A673 (cell line): ENCODE measurements at regions of chr19 and their contacts with region 1.

Region 1: DNA sequence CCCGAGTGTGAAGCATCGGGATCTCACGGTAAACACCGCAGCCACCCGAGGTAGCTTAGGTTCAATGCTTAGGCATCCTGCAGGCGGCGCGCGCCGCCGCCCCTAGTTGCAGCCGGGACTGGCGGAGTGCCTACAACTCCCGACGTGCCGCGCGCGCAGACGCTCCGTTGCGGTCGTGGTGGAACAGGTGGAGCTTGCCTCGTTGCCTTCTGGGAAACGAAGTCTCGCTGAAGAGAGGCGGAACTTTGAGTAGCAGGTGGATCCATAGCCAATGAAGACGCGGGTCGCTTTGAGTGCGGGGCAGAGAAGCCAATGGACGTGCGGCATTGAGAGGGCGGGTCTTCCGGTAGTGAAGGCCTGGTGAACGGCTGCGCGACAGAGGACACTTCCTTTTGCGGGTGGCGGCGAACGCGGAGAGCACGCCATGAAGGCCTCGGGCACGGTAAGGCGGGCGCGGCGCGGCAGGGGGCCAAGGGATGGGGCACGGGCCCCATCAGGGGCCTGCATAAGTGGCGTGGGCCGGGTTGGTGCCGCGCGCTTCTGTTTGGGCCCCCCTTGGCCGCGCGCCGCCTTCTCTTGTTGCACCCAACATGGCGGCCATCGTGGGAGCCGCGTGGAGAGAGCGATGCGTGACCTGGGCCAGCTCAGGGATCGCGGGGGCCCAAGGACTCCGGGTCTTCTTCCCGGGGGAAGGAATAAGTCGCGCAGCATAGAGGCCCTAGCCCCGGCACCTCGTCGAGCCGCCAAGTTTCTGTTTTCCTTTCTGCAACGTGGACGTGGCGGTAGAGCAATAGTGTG is at the start of gene RPL18A:
- DNase-seq: peak; percentile 100
- H3K4me3 ChIP-seq: peak within 1 kb of the TSS; percentile 74
- H3K27ac ChIP-seq: peak within 1 kb of the TSS; percentile 85
- H3K4me1 ChIP-seq: peaks cover 12% of the 10 kb centered on the region
- H3K27me3 ChIP-seq: no peaks in the 10 kb centered on the region
- CTCF ChIP-seq: peak; percentile 95
- total RNA-seq, gene RPL18A: 1,852 and 1,889 TPM in 2 replicates

Region 2: DNA sequence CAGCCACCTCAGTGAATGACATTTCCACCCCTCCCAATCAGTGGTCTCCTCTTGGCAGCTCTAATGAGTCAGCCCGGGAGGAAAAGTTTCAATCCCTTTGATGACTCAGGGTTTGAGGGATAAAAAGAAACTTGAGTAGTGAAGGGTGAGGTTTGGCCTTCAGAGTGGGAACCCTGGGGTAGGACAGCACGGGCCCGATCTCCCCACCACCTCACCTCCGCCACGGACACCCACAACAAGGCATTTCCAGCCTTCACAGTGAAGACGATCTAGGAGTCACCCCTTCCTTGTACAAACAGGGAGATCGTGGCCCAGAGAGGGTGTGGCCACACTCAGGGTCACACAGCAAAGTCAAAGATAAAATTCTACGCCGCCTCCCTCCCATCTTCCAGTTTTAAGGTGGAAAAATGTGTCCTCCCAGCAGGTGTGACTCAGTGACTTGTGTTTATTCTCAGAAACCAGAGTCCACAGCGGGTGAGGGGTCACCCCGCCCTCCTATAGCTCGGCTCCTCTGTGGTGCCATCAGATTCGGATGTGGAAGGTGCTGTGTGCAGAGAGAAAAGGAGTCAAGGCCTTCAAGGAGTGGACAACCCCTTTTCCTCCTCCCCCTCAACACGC is 1698.7 kb before region 1 on chr19:
- CTCF ChIA-PET with region 1: interaction called, 11 read pairs
- POLR2A ChIA-PET with region 1: no interaction called
- intact Hi-C with region 1: no loop called
- DNase-seq: peak; percentile 45
- H3K4me3 ChIP-seq: no peak overlapping the region
- H3K27ac ChIP-seq: no peak overlapping the region
- H3K4me1 ChIP-seq: no peaks in the 10 kb centered on the region
- H3K27me3 ChIP-seq: no peaks in the 10 kb centered on the region
- CTCF ChIP-seq: no peak

Region 3: DNA sequence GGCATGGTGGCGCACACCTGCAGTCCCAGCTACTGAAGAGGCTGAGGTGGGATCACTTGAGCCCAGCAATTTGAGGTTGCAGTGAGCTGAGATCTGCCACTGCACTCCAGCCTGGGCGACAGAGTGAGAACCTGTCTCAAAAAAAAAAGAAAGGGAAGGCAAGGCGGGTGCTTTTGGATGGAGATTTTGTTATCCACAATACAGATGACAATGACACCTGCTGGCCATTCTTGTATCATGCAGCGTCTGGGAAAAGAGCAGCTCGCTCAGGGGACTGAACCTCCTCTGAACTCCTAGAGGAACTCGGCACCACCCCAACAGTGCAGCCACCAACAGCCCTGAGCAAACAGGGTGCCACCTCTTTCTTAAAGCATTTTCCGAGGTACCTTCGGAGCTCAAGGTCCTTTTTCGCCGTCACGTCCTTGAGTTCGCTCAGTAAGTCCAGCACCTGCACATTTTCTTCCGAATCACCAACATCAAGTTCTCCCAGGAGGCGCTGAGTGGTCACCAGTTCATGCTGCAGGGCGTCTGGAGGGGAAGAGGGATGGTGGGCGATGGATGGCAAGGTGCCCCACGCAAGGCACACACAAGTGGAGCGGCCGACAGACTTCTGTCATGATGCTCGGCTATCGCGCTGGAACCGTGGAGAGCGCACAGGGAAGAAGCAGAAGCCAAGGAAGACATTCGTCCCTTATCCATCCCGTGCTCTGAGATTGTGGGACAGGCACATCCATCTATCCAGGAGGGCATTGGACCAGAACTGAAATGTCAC is 807.1 kb before region 1 on chr19:
- CTCF ChIA-PET with region 1: no interaction called
- POLR2A ChIA-PET with region 1: interaction called, 19 read pairs
- intact Hi-C with region 1: no loop called
- DNase-seq: peak; percentile 68
- H3K4me3 ChIP-seq: no peak overlapping the region
- H3K27ac ChIP-seq: no peak overlapping the region
- H3K4me1 ChIP-seq: no peaks in the 10 kb centered on the region
- H3K27me3 ChIP-seq: no peaks in the 10 kb centered on the region
- CTCF ChIP-seq: peak; percentile 61

Region 4: DNA sequence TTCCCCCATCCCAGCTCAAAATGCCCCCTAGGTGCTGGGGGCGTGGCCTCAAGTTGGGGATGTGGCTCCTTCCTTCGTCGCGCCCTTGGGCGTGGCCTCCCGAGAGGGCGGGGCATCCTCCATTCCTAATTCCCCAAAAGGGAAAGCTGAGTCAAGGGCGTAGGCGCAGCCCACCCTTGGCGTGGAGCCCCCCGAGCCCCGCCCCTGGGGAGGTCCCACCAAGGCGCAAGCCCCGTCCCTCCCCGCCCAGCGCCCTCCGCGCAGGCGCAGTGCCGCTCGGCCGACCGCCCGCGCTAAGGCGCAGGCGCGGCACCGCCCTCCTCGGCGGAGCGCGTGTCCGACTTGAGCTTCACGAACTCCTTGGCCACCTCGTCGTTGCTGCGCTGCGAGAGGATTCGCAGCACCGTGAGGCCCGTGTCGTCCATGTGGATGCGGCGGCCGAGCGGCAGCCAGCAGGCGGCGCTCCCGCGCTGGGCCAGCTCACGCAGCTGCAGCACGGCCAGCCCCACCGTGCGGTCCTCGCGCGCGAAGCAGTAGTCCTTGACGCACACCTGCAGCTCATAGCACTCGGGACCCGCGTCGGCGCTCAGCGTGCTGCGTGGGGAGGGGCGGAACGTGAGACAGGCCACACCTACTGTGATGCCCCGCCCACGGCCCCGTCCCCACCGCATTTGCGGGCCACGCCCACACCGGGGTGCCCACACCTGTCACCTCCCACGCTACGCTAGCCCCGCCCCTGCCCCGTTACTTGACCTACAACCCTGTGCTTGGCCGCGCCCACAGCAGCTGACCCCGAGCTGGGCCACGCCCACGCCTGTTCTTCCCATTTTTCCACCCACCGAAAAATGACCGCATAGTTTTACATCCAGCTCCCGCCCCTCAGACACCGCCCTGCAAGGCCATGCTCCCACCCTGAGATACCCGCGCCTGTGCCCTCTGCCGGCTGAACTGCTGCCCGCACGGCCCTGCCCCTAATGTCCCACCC is 253.7 kb before region 1 on chr19:
- CTCF ChIA-PET with region 1: no interaction called
- POLR2A ChIA-PET with region 1: no interaction called
- intact Hi-C with region 1: loop called (anchors 10 kb)
- DNase-seq: peak; percentile 93
- H3K4me3 ChIP-seq: peak overlapping the region; percentile 49
- H3K27ac ChIP-seq: peak overlapping the region; percentile 93
- H3K4me1 ChIP-seq: peaks cover 10% of the 10 kb centered on the region
- H3K27me3 ChIP-seq: no peaks in the 10 kb centered on the region
- CTCF ChIP-seq: peak; percentile 59

Region 5: GRCh38 chr19:17775245-17775916 is 84.4 kb before region 1 on chr19:
- CTCF ChIA-PET with region 1: no interaction called
- POLR2A ChIA-PET with region 1: no interaction called
- intact Hi-C with region 1: no loop called
- DNase-seq: no peak
- H3K4me3 ChIP-seq: no peak overlapping the region
- H3K27ac ChIP-seq: no peak overlapping the region
- H3K4me1 ChIP-seq: peaks cover 8% of the 10 kb centered on the region
- H3K27me3 ChIP-seq: no peaks in the 10 kb centered on the region
- CTCF ChIP-seq: peak; percentile 61

Region 6: GRCh38 chr19:17794731-17795536 is 64.8 kb before region 1 on chr19 and contains the start of gene B3GNT3:
- CTCF ChIA-PET with region 1: no interaction called
- POLR2A ChIA-PET with region 1: no interaction called
- intact Hi-C with region 1: loop called (anchors 10 kb)
- DNase-seq: peak; percentile 69
- H3K4me3 ChIP-seq: peak within 1 kb of the TSS; percentile 19
- H3K27ac ChIP-seq: no peak within 1 kb of the TSS
- H3K4me1 ChIP-seq: peaks cover 26% of the 10 kb centered on the region
- H3K27me3 ChIP-seq: peaks cover 17% of the 10 kb centered on the region
- CTCF ChIP-seq: no peak
- total RNA-seq, gene B3GNT3: not detected in 2 replicates

Region 7: DNA sequence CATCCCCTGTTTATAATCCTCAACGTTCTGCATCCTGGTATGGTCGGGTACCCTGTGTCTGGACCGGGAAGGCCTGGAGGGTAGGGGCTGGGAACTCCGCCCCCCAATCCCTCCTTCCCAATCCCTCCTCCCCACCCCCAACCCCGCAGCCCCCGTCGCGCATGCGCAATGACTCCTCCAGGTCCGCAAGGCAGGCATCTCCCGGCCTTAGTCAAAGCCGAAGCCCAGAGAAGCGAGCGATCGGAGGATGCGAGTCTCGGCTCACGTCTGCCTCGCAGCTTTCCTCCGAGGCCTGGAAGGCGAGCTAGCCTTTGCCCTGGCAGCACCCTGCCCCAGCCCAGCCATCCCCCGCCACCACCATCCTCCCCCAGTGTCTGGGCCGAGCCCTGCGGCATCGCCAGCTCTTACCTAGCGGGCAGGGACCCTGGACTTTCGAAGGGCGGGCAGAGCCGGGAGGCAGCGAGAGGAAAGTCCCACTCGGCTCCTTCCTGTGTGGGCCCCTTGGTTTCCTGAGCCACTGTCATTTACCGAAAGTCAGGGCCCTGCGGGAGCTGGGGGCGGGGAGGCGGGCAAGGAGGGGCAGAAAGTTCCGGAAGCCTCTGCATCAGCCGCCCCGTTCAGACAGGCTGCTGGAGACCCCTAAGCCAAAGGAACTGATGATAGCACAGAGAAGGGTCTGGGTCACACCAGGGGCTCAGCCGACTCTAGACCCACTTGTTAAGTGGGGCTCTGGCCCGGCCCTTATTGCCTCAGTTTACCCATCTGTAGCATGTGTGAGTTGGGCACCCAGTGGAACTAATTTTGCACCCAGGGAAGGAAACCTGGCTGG is 12.0 kb before region 1 on chr19 and contains the start of gene JAK3:
- CTCF ChIA-PET with region 1: interaction called, 4 read pairs
- POLR2A ChIA-PET with region 1: interaction called, 12 read pairs
- intact Hi-C with region 1: no loop called
- DNase-seq: peak; percentile 88
- H3K4me3 ChIP-seq: peak within 1 kb of the TSS; percentile 43
- H3K27ac ChIP-seq: peak within 1 kb of the TSS; percentile 59
- H3K4me1 ChIP-seq: peaks cover 9% of the 10 kb centered on the region
- H3K27me3 ChIP-seq: no peaks in the 10 kb centered on the region
- CTCF ChIP-seq: no peak
- total RNA-seq, gene JAK3: 2.4 and 2.5 TPM in 2 replicates

Region 8: DNA sequence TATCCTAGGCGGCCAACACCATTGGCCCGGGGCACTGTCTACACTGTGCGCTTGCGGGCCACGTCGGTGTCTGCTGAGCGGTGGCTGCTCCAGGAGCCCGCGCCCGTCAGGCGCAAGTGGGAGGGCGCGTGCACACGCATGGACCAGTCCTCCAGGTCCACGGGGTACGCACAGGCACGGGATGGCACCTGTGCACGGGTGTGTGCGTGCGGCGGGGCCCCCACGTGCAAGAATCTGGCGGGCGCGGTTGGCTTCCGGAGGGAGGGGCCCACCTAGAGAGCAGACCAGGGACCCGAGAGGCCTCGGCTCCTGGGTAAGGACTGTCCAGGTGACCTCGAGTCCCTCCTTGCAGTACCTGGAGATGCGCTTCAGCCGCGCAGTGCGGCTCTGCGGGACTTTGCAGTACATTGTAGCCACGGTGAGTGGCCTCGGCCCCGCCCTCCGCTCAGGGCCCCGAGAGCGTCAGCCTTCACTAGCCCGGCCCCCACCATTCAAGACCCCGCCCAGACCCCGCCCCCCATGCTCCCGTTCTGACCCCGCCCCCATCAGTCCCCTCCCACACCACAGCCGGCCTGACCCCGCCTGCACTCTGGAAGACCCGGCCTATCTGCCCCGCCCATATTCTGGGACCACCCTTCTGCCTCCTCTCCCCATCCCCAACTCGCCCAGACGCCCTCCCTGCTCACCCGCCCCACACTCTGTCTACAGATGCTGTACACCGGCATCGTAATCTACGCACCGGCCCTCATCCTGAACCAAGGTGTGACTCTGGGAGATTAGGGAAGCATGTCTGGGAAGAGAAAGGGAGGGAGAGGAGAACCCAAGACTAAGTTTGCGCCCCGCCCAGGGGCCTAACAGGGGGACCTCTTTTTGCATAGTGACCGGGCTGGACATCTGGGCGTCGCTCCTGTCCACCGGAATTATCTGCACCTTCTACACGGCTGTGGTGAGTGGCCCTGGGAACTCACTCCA is 14.3 kb after region 1 on chr19:
- CTCF ChIA-PET with region 1: no interaction called
- POLR2A ChIA-PET with region 1: no interaction called
- intact Hi-C with region 1: no loop called
- DNase-seq: peak; percentile 75
- H3K4me3 ChIP-seq: peak overlapping the region; percentile 31
- H3K27ac ChIP-seq: no peak overlapping the region
- H3K4me1 ChIP-seq: peaks cover 5% of the 10 kb centered on the region
- H3K27me3 ChIP-seq: peaks cover 46% of the 10 kb centered on the region
- CTCF ChIP-seq: no peak

Region 9: GRCh38 chr19:17932485-17933338 is 73.0 kb after region 1 on chr19 and contains the start of gene CCDC124:
- CTCF ChIA-PET with region 1: interaction called, 55 read pairs
- POLR2A ChIA-PET with region 1: interaction called, 4 read pairs
- intact Hi-C with region 1: loop called (anchors 1 kb)
- DNase-seq: peak; percentile 95
- H3K4me3 ChIP-seq: peak within 1 kb of the TSS; percentile 85
- H3K27ac ChIP-seq: peak within 1 kb of the TSS; percentile 97
- H3K4me1 ChIP-seq: peaks cover 11% of the 10 kb centered on the region
- H3K27me3 ChIP-seq: no peaks in the 10 kb centered on the region
- CTCF ChIP-seq: peak; percentile 98
- total RNA-seq, gene CCDC124: 131 and 135 TPM in 2 replicates